Mammary epithelial cell (primary cell): ENCODE measurements at regions of chr1 and their contacts with region 1.

Region 1: DNA sequence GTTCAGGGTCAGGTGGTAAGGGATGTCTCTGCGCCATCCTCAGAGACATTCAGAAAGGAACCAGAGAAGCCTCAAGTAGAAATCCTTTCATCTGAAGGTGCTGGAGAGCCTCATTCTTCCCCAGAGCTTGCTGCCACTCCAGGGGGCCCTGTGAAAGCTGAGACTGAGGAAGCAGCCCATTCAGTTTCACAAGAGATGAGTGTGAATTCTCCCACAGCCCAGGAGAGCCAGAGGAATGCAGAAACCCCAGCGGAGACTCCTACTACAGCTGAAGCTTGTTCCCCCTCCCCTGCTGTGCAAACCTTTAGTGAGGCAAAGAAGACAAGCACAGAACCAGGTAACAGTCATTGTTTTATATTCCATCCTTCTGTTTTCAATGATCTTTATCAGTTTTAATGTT is 38.7 kb downstream of the ZBTB40 start:
- DNase-seq: no peak
- H3K4me3 ChIP-seq: no peak overlapping the region
- H3K27ac ChIP-seq: no peak overlapping the region
- H3K4me1 ChIP-seq: no peaks in the 10 kb centered on the region
- H3K27me3 ChIP-seq: no peaks in the 10 kb centered on the region
- CTCF ChIP-seq: no peak

Region 2: DNA sequence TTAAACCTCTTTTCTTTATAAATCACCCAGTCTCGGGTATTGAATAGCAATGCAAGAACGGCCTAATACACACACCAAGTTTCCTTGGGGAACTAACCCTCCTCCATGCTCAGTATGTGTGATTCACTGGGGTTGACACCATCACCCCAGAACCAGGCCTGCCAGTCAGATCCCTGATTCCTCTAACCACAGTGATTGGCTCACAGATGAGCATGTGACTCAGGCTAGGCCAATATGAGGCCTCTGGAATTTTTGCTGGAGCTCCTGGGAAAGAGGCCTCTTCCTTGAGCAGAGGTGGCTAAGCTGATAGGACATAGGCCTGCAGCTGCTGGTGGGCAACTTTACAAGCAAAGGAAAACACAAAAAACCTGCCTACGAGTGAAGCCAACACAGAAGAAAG is 113.3 kb before region 1 on chr1:
- CTCF ChIA-PET with region 1: no interaction called
- dilution Hi-C with region 1: loop called (anchors 10 kb)
- in situ Hi-C with region 1: no loop called
- intact Hi-C with region 1: no loop called
- DNase-seq: no peak
- H3K4me3 ChIP-seq: no peak overlapping the region
- H3K27ac ChIP-seq: no peak overlapping the region
- H3K4me1 ChIP-seq: peaks cover 4% of the 10 kb centered on the region
- H3K27me3 ChIP-seq: no peaks in the 10 kb centered on the region
- CTCF ChIP-seq: no peak

Region 3: GRCh38 chr1:22527555-22528296 is 37.4 kb after region 1 on chr1:
- CTCF ChIA-PET with region 1: no interaction called
- dilution Hi-C with region 1: loop called (anchors 5 kb)
- in situ Hi-C with region 1: no loop called
- intact Hi-C with region 1: no loop called
- DNase-seq: no peak
- H3K4me3 ChIP-seq: no peak overlapping the region
- H3K27ac ChIP-seq: no peak overlapping the region
- H3K4me1 ChIP-seq: peaks cover 4% of the 10 kb centered on the region
- H3K27me3 ChIP-seq: no peaks in the 10 kb centered on the region
- CTCF ChIP-seq: peak in 1 of 2 donors; percentile 7

Region 4: GRCh38 chr1:22586356-22587130 is 96.2 kb after region 1 on chr1:
- CTCF ChIA-PET with region 1: no interaction called
- dilution Hi-C with region 1: loop called (anchors 5 kb)
- in situ Hi-C with region 1: no loop called
- intact Hi-C with region 1: no loop called
- DNase-seq: no peak
- H3K4me3 ChIP-seq: no peak overlapping the region
- H3K27ac ChIP-seq: no peak overlapping the region
- H3K4me1 ChIP-seq: no peaks in the 10 kb centered on the region
- H3K27me3 ChIP-seq: no peaks in the 10 kb centered on the region
- CTCF ChIP-seq: no peak

Region 5: GRCh38 chr1:22600071-22600816 is 109.9 kb after region 1 on chr1:
- CTCF ChIA-PET with region 1: no interaction called
- dilution Hi-C with region 1: no loop called
- in situ Hi-C with region 1: no loop called
- intact Hi-C with region 1: no loop called
- DNase-seq: no peak
- H3K4me3 ChIP-seq: no peak overlapping the region
- H3K27ac ChIP-seq: no peak overlapping the region
- H3K4me1 ChIP-seq: no peaks in the 10 kb centered on the region
- H3K27me3 ChIP-seq: peaks cover 5% of the 10 kb centered on the region
- CTCF ChIP-seq: no peak